Activated B cell treated with CpG ODN at 0.5 μM for 24 hours (primary cell): ENCODE measurements at regions of chr16 and their contacts with region 1.

Region 1: DNA sequence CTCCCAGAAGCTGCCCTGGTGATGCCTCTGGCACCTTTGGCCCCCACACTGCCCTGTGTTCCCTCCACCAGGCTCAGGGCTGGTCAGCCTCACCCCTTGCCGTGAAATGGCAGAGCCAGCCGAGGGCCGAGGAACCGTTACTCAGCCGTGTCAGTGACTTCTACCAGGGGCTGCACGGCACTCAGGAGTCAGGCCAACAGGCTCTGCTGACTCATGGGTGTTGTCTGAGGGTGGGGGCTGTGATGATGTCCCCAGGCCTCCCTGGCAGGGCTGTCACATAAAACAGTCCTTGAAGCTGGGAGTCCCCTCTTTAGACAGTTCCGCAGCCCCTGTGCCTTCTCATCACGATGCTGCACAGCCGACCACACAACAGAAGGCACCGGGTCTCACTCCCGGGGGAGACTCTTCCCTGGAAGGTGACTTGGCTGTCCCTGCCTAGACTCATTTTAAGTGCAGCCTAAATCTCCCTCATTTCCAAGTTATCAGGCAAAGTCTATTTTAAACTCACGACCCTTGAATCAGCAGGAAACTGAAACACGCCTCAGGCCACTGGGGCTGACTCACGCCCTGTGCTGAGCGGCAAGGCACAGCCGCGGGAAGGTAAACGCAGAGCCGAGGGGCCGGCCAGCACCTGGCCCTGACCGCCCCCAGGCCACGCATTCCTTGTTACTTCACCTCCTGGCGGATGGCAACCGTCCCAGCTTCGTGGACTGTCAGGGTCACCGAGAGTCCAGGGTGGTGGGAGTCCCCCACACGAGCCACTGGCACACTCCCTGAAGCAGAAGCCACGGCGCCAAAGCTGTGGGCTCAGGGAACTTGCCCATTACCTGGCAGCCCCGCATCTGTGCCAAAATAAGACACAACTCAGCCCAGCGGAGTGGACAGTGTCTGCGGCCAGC is 102.6 kb downstream of the ZNF778 start:
- DNase-seq: no peak
- ATAC-seq: peak; percentile 35
- H3K4me3 Mint-ChIP-seq: peak overlapping the region; percentile 56
- H3K27ac Mint-ChIP-seq: peak overlapping the region; percentile 36
- H3K4me1 Mint-ChIP-seq: peaks cover 92% of the 10 kb centered on the region
- H3K27me3 Mint-ChIP-seq: no peaks in the 10 kb centered on the region
- CTCF ChIP-seq: no peak

Region 2: DNA sequence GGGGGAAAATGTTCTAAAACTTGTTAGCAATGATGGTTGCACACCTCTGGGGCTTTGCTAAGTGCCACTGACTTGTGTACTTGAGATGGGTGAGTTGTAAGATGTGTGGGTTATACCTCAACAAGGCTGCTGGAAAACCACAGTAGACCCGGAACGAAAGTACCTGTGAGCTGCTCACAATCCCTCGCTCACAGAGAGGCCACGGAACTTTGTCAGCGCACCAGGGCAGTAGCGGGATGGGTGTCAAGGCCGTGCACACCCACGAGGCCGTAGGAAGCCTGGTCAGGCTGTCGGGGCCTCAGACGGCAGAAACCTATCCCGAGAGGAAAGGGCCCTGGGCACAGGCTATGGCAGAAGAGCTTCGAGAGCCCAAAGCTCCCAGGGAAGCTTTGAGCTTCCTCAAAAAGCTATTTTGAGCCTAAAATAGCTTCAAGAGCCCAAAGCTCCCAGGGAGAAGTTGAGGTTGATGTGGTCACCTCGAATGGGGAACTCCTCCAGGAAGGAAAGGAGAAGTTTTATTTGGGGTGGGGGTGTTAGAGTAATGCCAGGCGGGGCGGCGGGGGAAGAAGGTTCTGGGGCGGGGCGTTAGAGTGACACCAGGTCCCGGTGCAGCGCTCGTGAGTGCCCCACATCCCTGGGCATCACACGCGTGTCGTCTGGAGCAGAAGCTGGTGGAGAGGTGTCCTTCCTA is 362.1 kb before region 1 on chr16:
- CTCF ChIA-PET with region 1: no interaction called
- POLR2A ChIA-PET with region 1: no interaction called
- intact Hi-C with region 1: no loop called
- DNase-seq: no peak
- ATAC-seq: peak; percentile 52
- H3K4me3 Mint-ChIP-seq: peak overlapping the region; percentile 56
- H3K27ac Mint-ChIP-seq: peak overlapping the region; percentile 70
- H3K4me1 Mint-ChIP-seq: peaks cover 36% of the 10 kb centered on the region
- H3K27me3 Mint-ChIP-seq: no peaks in the 10 kb centered on the region
- CTCF ChIP-seq: no peak

Region 3: DNA sequence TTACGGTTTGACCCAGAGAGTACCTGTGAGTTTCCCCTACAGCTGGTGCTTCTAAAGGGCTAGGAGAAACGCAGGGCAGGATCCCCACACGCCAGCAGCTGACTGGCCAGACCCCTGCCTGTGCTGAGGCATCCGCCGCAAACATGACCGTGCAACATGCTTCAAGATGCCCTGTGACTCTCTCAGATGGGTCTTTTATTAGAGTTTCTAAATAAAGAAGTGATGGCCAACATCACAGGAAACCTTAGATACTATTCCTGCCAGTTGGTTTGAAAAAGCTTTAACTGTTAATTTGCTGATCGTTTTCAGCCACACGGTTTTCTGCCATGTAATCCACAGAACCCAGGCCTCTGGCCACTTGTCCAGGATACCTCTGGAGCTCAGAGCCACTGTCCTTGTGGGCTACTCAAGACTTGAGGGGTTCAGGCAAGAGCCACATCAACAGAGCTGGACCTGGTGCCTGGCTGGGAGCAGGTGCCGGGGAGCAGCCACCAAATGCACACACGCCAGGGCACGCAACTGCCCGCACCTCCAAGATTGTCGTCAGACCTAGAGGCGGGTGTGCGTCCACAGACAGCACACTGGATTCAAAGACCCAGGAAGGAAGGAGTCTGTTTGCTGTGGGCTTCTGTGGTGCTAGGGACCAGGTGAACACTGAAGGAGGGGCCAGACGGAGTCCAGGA is 15.8 kb after region 1 on chr16:
- CTCF ChIA-PET with region 1: no interaction called
- POLR2A ChIA-PET with region 1: interaction called, 10 read pairs
- intact Hi-C with region 1: no loop called
- DNase-seq: no peak
- ATAC-seq: no peak
- H3K4me3 Mint-ChIP-seq: no peak overlapping the region
- H3K27ac Mint-ChIP-seq: no peak overlapping the region
- H3K4me1 Mint-ChIP-seq: peaks cover 71% of the 10 kb centered on the region
- H3K27me3 Mint-ChIP-seq: no peaks in the 10 kb centered on the region
- CTCF ChIP-seq: no peak